ENCODE measurements at regions of chr9 and their contacts with region 1.

Region 1: GRCh38 chr9:34126207-34127034 is at the start of gene DCAF12:
- DNase-seq: peak; percentile 90
- H3K4me3 Mint-ChIP-seq: peak within 1 kb of the TSS; percentile 98
- H3K27ac Mint-ChIP-seq: peak within 1 kb of the TSS; percentile 98
- H3K4me1 Mint-ChIP-seq: peaks cover 37% of the 10 kb centered on the region
- H3K27me3 Mint-ChIP-seq: no peaks in the 10 kb centered on the region
- total RNA-seq, gene DCAF12: 42.8 and 43.5 TPM in 2 replicates

Region 2: GRCh38 chr9:33785913-33786312 is 340.5 kb before region 1 on chr9:
- intact Hi-C with region 1: no loop called
- DNase-seq: no peak
- H3K4me3 Mint-ChIP-seq: no peak overlapping the region
- H3K27ac Mint-ChIP-seq: no peak overlapping the region
- H3K4me1 Mint-ChIP-seq: peaks cover 1% of the 10 kb centered on the region
- H3K27me3 Mint-ChIP-seq: peaks cover 31% of the 10 kb centered on the region

Region 3: DNA sequence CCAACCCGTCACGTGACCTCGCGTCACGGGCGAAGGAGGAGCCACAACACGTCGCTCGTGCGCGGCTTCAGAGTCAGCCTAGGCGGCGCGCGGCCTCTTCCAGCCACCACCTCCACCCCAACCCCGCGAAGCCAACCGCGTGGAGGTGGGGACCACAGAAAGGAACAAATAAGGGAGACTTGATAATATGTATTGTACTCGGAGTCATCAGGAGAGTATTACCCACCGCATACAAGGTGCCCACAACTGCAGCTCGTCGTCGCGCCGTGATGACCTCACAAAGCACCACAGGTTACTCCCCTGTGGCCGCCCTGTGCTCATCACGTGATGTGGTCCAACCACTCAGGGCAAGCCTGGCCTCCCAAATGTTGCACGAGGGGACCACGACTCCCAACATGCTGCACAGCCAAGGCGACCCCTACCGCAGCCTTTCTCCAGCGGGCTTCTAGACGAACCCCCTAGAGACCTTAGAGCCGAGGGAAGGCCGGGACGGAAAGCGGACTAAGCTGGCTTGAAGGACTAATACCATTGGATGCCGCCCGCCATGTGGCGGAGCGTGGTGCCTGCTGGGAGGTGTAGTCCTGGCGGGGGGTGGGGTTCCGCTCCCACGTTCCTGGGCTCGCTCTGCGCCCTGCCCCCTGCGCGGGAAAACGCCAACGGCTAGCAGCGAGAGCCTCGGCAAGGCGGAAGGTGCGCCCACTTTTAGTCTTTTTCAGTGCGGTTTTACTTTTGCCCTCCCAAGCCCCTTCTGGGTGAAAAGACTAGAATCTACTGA is 77.3 kb before region 1 on chr9:
- intact Hi-C with region 1: loop called (anchors 1 kb)
- DNase-seq: peak; percentile 96
- H3K4me3 Mint-ChIP-seq: peak overlapping the region; percentile 91
- H3K27ac Mint-ChIP-seq: peak overlapping the region; percentile 98
- H3K4me1 Mint-ChIP-seq: peaks cover 39% of the 10 kb centered on the region
- H3K27me3 Mint-ChIP-seq: no peaks in the 10 kb centered on the region

Region 4: DNA sequence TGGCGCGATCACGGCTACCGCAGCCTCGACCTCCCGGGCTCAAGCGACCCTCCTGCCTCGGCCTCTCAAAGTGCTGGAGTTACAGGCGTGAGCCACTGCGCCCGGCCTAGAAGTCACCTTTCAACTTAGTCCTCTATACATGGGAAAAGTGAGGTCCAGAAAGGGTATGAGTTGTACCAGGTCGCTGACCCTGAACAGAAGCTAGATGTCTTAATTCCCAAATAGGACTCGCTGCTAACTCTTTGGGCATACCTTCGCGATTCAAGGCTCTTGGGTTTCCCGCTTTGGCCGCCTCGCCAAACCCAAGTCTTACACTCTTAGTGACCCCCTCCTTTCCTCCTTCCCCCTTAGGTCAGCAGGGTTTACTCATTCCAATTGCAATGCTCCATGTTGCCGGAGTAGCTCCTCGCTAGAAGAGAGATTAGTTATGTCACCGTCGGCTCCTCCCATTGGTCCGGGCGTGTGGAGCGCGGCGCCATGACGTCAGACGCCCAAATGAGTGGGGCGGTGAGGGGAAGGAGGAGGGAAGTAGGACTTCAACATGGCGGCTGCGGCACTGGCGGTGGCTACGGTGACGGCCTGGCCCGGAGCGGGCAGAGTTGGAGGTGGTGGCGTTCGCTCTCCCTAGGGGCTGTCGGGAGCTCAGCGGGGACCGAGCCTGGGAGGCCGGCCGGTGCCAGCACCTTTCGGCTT is 52.2 kb after region 1 on chr9 and contains the start of gene UBAP1:
- intact Hi-C with region 1: loop called (anchors 1 kb)
- DNase-seq: peak; percentile 95
- H3K4me3 Mint-ChIP-seq: peak within 1 kb of the TSS; percentile 90
- H3K27ac Mint-ChIP-seq: peak within 1 kb of the TSS; percentile 94
- H3K4me1 Mint-ChIP-seq: peaks cover 11% of the 10 kb centered on the region
- H3K27me3 Mint-ChIP-seq: no peaks in the 10 kb centered on the region
- total RNA-seq, gene UBAP1: 33.6 and 33.7 TPM in 2 replicates

Region 5: DNA sequence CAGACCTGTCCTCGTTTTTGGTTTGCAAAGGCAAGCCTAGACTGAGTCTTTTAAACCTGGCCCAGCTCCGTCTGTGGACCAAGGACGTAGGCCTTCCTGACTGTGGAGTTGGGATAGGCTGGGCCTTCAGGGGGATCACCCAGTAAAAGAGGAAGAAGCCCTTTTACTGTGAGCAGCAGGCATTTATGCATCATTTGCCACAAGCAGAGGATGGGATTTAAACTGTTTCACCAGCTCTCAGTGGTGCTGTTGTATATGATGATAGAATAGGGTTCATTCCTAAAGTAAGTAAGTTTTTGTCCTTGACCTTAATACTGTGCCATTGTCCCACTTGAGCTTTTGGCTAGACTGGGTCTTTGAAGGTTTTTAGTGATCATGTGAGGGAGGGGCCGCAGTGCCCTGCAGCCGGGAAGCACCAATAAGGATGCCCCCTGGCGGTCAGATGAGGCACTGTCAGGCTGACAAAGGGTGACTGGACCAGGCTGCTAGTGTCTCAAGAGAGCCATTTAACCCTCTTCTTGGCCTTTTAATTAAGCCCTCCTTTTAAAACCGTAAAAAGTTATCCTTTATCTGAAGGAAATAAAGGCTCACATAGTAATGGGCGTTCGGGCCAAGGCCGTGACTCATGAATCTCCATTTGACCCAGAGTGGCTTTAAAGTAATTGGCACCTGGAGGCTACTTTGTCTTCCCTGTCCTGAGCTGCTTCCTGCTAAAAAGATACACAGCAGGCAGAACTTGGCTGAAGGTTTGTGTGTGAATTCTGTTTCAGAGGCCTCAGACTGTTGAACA is 126.4 kb after region 1 on chr9:
- intact Hi-C with region 1: loop called (anchors 2 kb)
- DNase-seq: peak; percentile 58
- H3K4me3 Mint-ChIP-seq: no peak overlapping the region
- H3K27ac Mint-ChIP-seq: no peak overlapping the region
- H3K4me1 Mint-ChIP-seq: no peaks in the 10 kb centered on the region
- H3K27me3 Mint-ChIP-seq: no peaks in the 10 kb centered on the region

Region 6: DNA sequence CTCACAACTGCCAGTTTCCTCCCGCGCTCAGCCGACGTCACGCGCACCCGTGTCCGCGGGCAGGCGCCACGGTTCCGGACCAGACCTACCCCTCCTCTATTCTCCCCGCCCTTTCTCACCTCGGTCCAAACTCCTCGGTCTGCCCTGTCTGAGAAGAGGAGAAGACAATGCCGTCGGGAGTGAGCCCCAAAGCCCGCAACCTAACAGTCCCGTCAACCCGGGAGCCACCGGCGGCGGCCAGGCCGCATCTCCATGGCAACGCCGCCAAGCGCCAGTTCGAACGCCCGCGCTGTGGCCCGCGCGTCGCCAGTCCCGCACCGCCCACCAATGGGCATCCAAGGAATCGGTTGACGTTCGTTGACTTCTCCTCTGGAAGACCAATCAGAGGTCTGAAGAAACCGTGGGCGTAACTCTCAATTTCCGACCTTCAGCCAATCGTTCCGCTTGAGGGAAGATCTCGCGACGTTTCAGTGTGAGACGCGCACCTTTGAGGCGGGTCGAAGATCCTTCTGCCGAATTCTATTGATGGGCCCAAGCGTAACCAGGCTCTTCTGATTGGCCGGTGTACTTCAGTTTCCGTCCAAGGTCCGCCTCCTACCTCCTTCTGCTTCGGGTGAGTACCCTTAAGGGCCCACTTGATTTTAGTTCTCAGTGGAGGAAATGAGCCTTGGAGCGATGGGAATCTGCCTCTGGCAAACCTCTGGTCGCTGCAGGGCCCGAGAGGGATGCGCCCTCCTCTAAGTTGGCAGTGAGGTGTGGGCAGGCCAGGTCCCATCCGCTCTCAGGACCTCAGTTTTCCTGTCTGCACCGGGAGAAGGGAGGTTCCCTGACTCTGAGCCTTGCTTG is 202.8 kb after region 1 on chr9 and contains the starts of genes KIF24 and NUDT2:
- intact Hi-C with region 1: loop called (anchors 1 kb)
- DNase-seq: peak; percentile 97
- H3K4me3 Mint-ChIP-seq: peak within 1 kb of the TSS; percentile 98
- H3K27ac Mint-ChIP-seq: peak within 1 kb of the TSS; percentile 94
- H3K4me1 Mint-ChIP-seq: peaks cover 34% of the 10 kb centered on the region
- H3K27me3 Mint-ChIP-seq: no peaks in the 10 kb centered on the region
- total RNA-seq, gene KIF24: 4.8 and 5.0 TPM in 2 replicates
- total RNA-seq, gene NUDT2: 30.8 and 33.0 TPM in 2 replicates

Region 7: DNA sequence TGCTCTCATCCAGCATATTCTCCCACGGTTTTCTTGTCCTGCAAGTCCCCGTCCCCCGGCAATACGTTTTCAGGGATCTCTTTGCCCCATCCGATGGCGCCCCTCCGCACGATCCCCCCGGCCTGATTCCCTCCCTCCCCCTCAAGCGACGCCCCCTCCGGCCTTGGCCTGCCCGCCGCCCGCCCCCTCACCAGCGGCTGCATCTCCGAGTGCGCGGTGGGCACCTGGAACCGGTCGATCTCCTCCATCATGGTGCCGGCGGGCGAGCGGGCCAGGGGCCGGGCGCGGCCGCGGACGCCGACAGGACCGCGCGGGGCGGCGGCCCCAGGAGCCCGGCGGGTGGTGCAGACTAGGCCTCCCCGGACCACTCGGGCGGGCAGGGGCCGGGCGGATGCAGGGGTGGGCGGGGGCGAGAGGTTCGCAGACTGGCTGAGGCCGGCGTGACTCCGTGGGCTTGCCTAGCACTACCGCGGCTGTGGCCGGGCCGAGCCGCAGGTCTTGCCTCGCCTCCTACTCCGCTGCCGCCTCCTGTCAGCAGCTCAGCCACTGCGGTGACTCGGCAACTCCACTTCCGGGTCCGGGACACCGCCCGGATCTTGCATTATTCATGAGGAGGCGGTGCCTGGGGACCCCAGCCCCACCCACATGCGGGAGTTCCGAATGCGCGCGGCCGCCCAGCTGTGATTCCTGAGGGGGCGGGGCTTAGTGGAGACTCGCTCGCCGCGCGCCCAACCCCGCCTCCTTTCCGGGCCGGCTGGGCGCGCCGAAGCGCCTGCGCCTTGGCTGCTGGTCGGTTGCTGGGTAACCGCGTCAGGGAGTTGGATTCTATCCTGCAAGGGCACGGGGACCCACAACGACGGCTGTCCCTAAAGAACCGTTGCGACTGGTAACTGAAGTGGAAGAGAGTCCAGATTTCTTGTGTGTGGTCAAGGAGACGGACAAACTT is 331.9 kb after region 1 on chr9 and contains the starts of genes DNAI1 and FAM219A:
- intact Hi-C with region 1: loop called (anchors 1 kb)
- DNase-seq: peak; percentile 99
- H3K4me3 Mint-ChIP-seq: peak within 1 kb of the TSS; percentile 88
- H3K27ac Mint-ChIP-seq: peak within 1 kb of the TSS; percentile 60
- H3K4me1 Mint-ChIP-seq: peaks cover 43% of the 10 kb centered on the region
- H3K27me3 Mint-ChIP-seq: peaks cover 17% of the 10 kb centered on the region
- total RNA-seq, gene DNAI1: not detected in 2 replicates
- total RNA-seq, gene FAM219A: 17.3 and 19.7 TPM in 2 replicates